Activated T-helper 2 cell treated with anti-CD3 and anti-CD28 coated beads, Interferon-gamma antibody, Interleukin-2, Interleukin-4, amounts not matched to agents 10 μg/mL and 5 μg/mL and 100 μg/mL, durations not matched to agents 14 hours and 24 hours and 36 hours (primary cell): ENCODE measurements at regions of chr3 and their contacts with region 1.

Region 1: GRCh38 chr3:101381809-101382208 is 61.4 kb upstream of the IMPG2 start:
- DNase-seq: no peak
- H3K4me3 Mint-ChIP-seq: no peak overlapping the region
- H3K27ac Mint-ChIP-seq: no peak overlapping the region
- H3K4me1 Mint-ChIP-seq: peaks cover 31% of the 10 kb centered on the region
- H3K27me3 Mint-ChIP-seq: no peaks in the 10 kb centered on the region

Region 2: DNA sequence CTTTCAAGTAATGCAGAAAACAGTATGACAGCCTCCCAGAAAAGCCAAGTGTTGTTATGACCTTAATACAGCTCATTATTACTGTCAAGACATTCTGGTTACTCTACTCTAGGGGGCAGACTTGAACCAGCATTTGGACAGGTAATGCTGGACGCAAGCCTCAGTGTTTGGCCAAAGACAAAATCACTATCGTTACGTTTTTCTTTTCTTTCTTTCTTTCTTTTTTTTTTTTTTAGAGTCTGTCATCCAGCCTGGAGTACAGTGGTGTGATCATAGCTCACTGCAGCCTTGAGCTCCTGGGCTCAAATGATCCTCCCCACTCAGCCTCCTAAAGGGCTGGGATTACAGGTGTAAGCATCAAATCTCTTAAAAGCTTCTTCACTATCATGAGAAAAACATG is 918.8 kb before region 1 on chr3:
- intact Hi-C with region 1: loop called (anchors 5 kb)
- DNase-seq: no peak
- H3K4me3 Mint-ChIP-seq: no peak overlapping the region
- H3K27ac Mint-ChIP-seq: no peak overlapping the region
- H3K4me1 Mint-ChIP-seq: peaks cover 7% of the 10 kb centered on the region
- H3K27me3 Mint-ChIP-seq: peaks cover 2% of the 10 kb centered on the region

Region 3: DNA sequence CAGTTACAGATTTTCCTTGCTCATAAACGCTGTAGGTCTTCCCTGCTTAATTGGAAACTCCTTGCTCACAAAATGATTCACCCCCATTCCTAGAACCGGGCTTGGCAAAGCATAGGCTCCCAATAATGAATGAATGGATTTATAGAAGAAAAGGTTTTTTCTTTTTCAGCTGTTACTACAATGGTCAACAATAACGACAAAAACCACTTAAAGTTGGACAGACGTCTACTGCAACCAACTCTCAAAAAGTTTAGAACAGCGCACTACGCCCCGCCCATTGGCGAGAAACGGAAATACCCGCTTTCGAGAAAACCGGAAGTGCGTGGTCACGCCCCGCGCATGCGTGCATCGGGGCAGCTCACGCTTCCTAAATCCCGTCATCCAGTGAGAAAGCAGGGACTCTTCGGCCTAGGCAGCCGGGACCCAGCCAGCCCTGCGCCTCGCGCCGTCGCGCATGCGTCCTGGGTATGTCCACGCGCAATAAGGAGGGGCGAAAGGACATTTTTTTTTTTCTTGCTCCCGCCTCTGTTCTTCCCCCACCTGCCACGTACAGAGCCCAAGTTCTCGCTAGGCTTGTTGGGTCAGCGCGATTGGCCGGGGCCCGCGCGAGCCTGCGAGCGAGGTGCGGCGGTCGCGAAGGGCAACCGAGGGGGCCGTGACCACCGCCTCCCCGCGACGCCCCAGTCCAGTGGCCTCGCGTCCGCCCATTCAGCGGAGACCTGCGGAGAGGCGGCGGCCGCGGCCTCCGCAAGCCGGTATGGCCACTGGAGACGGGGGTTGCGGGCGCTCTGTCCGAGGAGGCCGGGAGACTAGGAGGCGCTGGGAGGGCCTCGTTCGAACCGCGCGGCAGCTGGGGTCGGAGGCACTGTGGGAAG is 672.6 kb before region 1 on chr3 and contains the start of gene TFG:
- intact Hi-C with region 1: loop called (anchors 1 kb)
- DNase-seq: peak; percentile 98
- H3K4me3 Mint-ChIP-seq: peak within 1 kb of the TSS; percentile 83
- H3K27ac Mint-ChIP-seq: peak within 1 kb of the TSS; percentile 85
- H3K4me1 Mint-ChIP-seq: peaks cover 41% of the 10 kb centered on the region
- H3K27me3 Mint-ChIP-seq: no peaks in the 10 kb centered on the region
- total RNA-seq, gene TFG: 79.3 and 81.2 TPM in 2 replicates

Region 4: DNA sequence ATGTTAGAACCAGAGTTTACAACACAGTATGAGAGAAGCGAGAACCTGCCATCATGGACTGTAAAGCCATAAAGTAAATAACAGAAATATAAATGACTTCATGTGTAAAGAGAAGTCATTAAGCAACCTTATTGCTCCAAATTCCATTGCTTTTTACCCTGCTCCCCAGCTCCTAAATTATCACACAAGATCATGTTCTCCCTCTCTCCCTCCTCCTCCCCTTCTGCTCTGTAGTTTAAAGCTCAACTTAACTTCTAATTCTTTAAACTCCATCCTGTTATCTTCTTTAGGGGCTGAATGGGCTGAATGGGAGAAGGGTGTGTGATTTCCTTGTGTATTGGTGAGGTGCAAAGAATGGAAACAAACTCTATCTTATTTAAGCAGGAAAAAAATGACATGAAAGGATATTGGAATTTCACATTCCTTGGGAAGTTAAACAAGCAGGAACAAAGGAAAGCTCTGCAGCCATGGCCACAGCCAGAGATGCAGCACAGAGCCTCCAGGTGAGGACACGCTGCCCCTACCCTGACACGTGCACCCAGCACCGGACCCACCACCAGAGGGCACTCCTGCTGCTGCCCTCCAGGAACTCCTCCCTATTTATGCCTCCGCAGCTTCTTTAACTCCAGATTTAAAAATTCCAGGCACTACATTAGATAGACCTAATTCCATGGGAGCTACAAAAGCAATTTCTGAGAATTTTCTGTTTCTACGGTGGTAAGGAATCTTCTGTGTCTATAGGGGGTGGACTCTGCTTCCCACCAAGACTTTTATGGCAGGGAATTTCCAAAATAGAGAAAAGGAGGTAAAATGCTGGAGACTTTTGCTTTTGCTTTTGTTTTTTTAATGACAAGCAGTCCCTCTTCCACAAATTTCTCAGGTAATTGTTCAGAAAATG is 311.7 kb before region 1 on chr3:
- intact Hi-C with region 1: loop called (anchors 1 kb)
- DNase-seq: peak; percentile 30
- H3K4me3 Mint-ChIP-seq: no peak overlapping the region
- H3K27ac Mint-ChIP-seq: no peak overlapping the region
- H3K4me1 Mint-ChIP-seq: peaks cover 6% of the 10 kb centered on the region
- H3K27me3 Mint-ChIP-seq: peaks cover 12% of the 10 kb centered on the region

Region 5: DNA sequence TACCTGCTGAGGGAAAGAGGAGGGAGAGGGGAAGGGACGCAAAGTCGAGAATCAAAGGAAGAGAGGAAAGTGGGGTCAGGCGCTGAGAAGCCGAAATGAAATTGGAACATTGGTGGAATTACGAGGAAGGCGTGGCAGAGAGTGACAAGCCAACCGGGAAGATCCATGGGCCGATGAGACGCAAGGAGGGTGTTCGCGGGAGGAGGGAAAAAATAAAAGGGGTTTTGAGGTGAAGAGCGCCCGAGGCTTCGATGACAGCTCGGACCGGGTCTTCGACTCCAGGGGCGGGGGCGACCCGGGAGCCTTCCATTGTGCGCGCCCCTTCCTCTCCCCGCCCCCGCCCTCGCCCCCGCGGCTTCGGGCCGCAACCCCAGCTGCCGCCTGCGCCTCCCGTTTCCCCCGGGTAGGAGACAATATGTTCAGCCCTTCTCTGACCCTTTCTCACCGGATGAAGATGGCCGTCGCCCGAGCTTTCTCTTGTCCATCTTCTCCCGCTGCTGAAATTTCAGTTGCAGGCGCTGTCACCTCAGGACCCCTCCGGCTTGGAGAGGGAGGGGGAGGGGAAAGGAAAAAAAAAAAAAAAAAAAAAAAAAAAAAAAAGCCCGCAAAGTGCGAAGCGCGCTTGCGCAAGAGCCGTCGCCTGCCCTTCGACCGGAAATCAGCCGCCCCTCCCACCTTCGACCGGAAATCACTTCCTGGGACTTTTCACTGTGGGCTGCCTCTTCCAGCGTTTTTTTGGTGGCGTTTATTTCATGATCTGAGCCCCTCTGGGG is 131.0 kb after region 1 on chr3 and contains the start of gene SENP7:
- intact Hi-C with region 1: loop called (anchors 5 kb)
- DNase-seq: peak; percentile 68
- H3K4me3 Mint-ChIP-seq: peak within 1 kb of the TSS; percentile 96
- H3K27ac Mint-ChIP-seq: peak within 1 kb of the TSS; percentile 93
- H3K4me1 Mint-ChIP-seq: peaks cover 26% of the 10 kb centered on the region
- H3K27me3 Mint-ChIP-seq: no peaks in the 10 kb centered on the region
- total RNA-seq, gene SENP7: 10.7 and 10.8 TPM in 2 replicates